ENCODE measurements at regions of chr1 and their contacts with region 1.

Region 1: GRCh38 chr1:45205910-45206721 is at the start of gene ZSWIM5:
- DNase-seq: peak; percentile 63
- H3K4me3 ChIP-seq: peak within 1 kb of the TSS; percentile 78 to 81
- H3K27ac ChIP-seq: peak within 1 kb of the TSS; percentile 91 to 92
- H3K4me1 ChIP-seq: no peaks in the 10 kb centered on the region
- H3K27me3 ChIP-seq: no peaks in the 10 kb centered on the region
- CTCF ChIP-seq: peak in 1 of 4 experiments; percentile 14
- POLR2A ChIP-seq: peak; percentile 34
- total RNA-seq, gene ZSWIM5: 7.2 to 18.6 TPM

Region 2: GRCh38 chr1:44985747-44986359 is 220.3 kb before region 1 on chr1:
- intact Hi-C with region 1: no loop called
- DNase-seq: no peak
- H3K4me3 ChIP-seq: peak overlapping the region; percentile 65 to 68
- H3K27ac ChIP-seq: peak overlapping the region; percentile 38 to 58
- H3K4me1 ChIP-seq: peaks cover 5% of the 10 kb centered on the region
- H3K27me3 ChIP-seq: no peaks in the 10 kb centered on the region
- CTCF ChIP-seq: no peak
- POLR2A ChIP-seq: no peak

Region 3: DNA sequence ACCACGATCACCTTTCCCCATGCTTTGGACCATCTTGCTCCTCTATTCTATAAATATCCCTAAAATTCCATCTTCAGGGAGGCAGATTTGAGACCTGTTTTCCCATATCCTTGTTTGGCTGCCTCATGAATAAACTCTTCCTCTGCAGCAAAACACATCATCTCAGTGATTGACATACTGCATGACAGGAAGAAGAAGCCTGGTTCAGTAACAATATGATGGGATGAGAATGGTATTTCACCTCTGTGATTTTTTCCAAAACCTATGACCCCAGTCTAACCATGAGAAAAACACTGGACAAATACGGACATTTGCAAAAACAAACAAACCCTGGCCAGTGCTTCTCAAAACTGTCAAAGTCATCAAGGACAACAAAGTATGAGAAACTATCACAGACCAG is 54.1 kb after region 1 on chr1:
- intact Hi-C with region 1: loop called (anchors 5 kb)
- DNase-seq: no peak
- H3K4me3 ChIP-seq: no peak overlapping the region
- H3K27ac ChIP-seq: no peak overlapping the region
- H3K4me1 ChIP-seq: no peaks in the 10 kb centered on the region
- H3K27me3 ChIP-seq: no peaks in the 10 kb centered on the region
- CTCF ChIP-seq: no peak
- POLR2A ChIP-seq: no peak

Region 4: DNA sequence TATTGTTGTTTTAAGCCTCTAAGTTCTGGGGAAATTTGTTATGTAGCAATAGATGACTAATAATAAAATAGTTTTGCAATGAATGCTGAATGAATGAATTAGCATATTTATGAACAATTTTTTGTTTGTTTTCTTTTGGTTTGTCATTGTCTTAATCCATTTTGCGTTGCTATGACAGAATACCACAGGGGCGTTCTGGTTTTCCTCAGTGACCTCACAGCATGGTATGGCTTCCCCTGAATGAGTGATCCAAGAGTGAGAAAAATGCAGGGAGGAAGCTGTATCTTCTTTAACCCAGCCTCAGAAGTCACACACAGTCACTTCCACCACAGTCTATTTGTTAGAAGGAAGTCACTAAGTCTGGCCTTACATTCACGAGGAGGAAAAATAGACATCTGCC is 66.9 kb after region 1 on chr1:
- intact Hi-C with region 1: no loop called
- DNase-seq: no peak
- H3K4me3 ChIP-seq: no peak overlapping the region
- H3K27ac ChIP-seq: no peak overlapping the region
- H3K4me1 ChIP-seq: no peaks in the 10 kb centered on the region
- H3K27me3 ChIP-seq: no peaks in the 10 kb centered on the region
- CTCF ChIP-seq: no peak
- POLR2A ChIP-seq: no peak

Measured in prostate gland (tissue), 2 donors.